Activated B cell treated with CpG ODN at 0.5 μM for 24 hours (primary cell): ENCODE measurements at regions of chr7 and their contacts with region 1.

Region 1: DNA sequence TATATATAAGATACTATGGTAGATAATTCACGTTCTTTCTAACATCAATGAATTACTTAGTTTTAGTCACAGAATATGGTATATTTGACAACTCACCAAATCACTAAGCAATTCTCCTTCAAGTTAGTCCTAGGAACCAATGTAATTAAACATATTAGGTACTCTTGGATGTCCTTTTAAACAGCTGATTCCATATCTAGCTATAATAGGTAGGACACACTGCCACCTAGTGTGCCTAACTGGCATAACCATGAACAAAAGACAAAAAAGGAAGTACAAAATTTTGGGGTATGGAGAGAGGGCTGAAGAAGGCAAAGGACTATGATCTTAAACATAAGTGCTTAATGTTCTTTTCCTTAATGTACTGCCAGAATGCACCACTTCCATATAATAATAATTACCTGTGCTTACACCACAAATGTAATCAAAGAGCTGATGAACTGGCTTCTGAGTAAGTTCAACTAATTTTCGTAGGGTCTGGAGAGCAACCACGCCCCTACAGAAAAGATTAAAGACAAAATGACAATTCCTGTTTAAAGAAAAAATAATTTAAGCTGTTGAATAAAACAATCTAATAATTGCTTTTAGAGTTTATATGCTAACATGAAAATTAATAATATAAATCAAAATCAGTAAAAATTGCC is 28.7 kb downstream of the PNPLA8 start:
- DNase-seq: no peak
- ATAC-seq: peak; percentile 95
- H3K4me3 Mint-ChIP-seq: no peak overlapping the region
- H3K27ac Mint-ChIP-seq: no peak overlapping the region
- H3K4me1 Mint-ChIP-seq: peaks cover 24% of the 10 kb centered on the region
- H3K27me3 Mint-ChIP-seq: no peaks in the 10 kb centered on the region
- CTCF ChIP-seq: peak; percentile 43

Region 2: DNA sequence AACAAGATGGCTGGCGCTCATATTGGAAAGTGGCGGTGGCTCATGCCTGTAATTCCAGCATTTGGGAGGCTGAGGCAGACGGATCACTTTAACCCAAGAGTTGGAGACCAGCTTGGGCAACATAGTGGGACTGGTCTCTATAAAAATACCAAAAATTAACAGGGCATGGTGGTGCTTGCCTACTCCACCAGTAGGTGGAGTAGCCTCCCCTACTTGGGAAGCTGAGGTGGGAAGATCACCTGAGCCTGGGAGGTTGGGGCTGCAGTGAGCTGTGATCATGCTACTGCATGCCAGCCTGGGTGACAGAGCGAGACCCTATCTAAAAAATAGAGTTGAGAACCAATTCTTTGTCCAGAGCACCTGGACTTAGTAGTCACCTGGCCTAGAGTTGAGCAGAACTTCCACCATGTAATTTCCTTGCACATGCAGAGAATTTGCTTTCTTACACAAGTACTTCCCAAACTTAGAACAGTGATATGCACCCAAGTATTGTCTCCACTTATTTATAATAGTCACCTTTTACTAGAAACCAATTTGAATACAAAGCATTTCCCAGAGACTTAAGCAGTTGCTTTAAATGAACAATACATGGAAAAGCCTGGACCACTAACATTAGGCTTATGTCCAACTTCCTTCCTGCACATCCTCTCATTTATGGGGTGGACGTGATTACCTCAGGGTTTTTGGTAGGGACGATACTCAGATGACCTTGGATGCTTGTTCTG is 382.9 kb before region 1 on chr7:
- CTCF ChIA-PET with region 1: interaction called, 5 read pairs
- POLR2A ChIA-PET with region 1: no interaction called
- intact Hi-C with region 1: loop called (anchors 1 kb)
- DNase-seq: no peak
- ATAC-seq: peak; percentile 74
- H3K4me3 Mint-ChIP-seq: no peak overlapping the region
- H3K27ac Mint-ChIP-seq: no peak overlapping the region
- H3K4me1 Mint-ChIP-seq: no peaks in the 10 kb centered on the region
- H3K27me3 Mint-ChIP-seq: no peaks in the 10 kb centered on the region
- CTCF ChIP-seq: no peak

Region 3: DNA sequence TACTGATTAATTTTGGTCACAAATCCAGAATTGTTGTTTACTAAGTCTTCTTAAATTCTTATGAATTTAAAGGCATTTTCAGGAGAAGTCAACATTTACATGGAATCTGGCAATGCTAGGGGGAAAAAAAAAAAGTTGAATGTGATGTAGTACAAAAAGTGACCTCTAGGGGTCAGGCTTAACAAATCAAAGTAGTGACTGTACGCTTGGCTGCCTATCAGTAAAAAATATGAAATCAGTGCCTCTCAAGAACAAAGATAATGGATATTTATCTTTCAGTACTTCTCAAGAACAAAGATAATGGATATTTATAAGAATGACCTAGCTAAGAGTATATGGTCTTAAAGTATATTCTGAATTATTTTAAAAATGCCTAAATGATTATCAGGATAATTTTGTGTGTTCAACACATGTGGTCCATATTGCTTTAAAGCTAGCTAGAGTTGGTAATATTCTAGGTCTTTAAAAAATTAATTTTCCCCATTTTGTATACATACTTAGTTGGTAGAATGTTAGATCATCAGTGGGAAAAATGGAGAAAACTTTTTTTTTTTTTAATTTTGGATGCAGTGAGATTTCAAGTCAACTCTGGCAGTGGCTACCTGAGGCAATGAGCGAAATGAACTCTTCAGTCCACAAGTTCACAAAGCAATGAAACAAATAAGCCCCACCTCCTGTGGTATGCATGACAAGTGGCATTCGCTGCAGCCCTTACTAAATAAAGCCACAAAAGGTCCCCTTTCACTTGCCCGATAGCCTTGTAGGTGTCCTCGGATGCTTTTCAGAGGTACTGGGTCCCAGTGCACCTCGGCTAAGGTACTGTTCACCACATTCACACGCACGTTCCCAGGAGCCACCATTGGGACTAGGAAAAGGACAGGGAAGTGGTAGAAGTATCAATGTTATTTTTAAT is 315.9 kb before region 1 on chr7:
- CTCF ChIA-PET with region 1: interaction called, 45 read pairs
- POLR2A ChIA-PET with region 1: no interaction called
- intact Hi-C with region 1: loop called (anchors 1 kb)
- DNase-seq: no peak
- ATAC-seq: peak; percentile 60
- H3K4me3 Mint-ChIP-seq: no peak overlapping the region
- H3K27ac Mint-ChIP-seq: no peak overlapping the region
- H3K4me1 Mint-ChIP-seq: no peaks in the 10 kb centered on the region
- H3K27me3 Mint-ChIP-seq: no peaks in the 10 kb centered on the region
- CTCF ChIP-seq: peak; percentile 75

Region 4: DNA sequence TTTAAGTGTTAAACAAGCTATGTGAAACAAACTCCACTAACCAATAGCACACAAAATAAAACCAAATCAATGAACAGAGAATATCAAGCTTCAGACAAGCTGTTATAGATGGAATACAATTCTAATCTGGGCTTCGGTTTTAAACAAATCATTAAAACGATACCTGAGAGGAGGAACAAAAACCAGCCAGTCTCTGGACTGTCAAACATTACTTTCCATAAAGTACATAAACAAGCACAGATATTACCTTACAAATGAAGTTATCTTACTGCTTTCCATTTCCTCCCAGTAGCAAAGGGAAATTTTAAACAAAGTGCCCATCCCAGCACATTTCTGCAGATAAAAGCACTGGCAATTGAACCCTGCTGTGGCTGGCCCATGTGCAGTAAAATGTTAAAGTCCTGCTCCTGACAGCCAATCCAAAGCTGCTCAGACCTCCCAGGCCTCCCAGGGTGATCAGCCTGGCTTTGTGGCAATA is 169.0 kb before region 1 on chr7:
- CTCF ChIA-PET with region 1: no interaction called
- POLR2A ChIA-PET with region 1: no interaction called
- intact Hi-C with region 1: no loop called
- DNase-seq: no peak
- ATAC-seq: peak; percentile 94
- H3K4me3 Mint-ChIP-seq: peak overlapping the region; percentile 69
- H3K27ac Mint-ChIP-seq: peak overlapping the region; percentile 87
- H3K4me1 Mint-ChIP-seq: peaks cover 37% of the 10 kb centered on the region
- H3K27me3 Mint-ChIP-seq: no peaks in the 10 kb centered on the region
- CTCF ChIP-seq: no peak

Region 5: GRCh38 chr7:108452722-108453121 is 44.5 kb before region 1 on chr7:
- CTCF ChIA-PET with region 1: interaction called, 64 read pairs
- POLR2A ChIA-PET with region 1: interaction called, 3 read pairs
- intact Hi-C with region 1: loop called (anchors 1 kb)
- DNase-seq: no peak
- ATAC-seq: peak; percentile 56
- H3K4me3 Mint-ChIP-seq: no peak overlapping the region
- H3K27ac Mint-ChIP-seq: no peak overlapping the region
- H3K4me1 Mint-ChIP-seq: peaks cover 26% of the 10 kb centered on the region
- H3K27me3 Mint-ChIP-seq: peaks cover 40% of the 10 kb centered on the region
- CTCF ChIP-seq: no peak

Region 6: DNA sequence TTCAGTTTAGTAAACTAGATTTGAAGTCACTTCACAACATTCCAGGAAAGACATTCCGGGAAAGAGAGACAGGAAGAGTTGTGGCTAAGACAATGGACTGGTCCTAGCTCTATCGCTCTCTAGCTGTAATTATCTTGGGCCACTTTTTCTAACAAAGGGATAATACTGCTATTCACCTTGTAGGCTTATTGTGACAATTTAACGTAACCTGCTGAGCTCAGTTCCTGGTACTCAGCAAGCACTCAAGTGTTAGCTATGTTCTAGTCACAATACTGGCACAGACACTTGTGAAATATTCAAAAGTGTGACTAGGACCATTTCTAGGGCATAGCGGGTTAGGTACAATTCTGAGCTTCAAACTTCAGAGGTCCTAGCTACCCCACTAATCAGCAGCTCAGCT is 29.0 kb before region 1 on chr7:
- CTCF ChIA-PET with region 1: interaction called, 3 read pairs
- POLR2A ChIA-PET with region 1: interaction called, 10 read pairs
- intact Hi-C with region 1: loop called (anchors 2 kb)
- DNase-seq: no peak
- ATAC-seq: no peak
- H3K4me3 Mint-ChIP-seq: no peak overlapping the region
- H3K27ac Mint-ChIP-seq: no peak overlapping the region
- H3K4me1 Mint-ChIP-seq: peaks cover 11% of the 10 kb centered on the region
- H3K27me3 Mint-ChIP-seq: peaks cover 24% of the 10 kb centered on the region
- CTCF ChIP-seq: no peak

Region 7: GRCh38 chr7:108569381-108570145 is 72.4 kb after region 1 on chr7 and contains the starts of genes DNAJB9 and THAP5:
- CTCF ChIA-PET with region 1: interaction called, 11 read pairs
- POLR2A ChIA-PET with region 1: interaction called, 94 read pairs
- intact Hi-C with region 1: no loop called
- DNase-seq: peak; percentile 97
- ATAC-seq: peak; percentile 89
- H3K4me3 Mint-ChIP-seq: peak within 1 kb of the TSS; percentile 98
- H3K27ac Mint-ChIP-seq: peak within 1 kb of the TSS; percentile 99
- H3K4me1 Mint-ChIP-seq: peaks cover 66% of the 10 kb centered on the region
- H3K27me3 Mint-ChIP-seq: no peaks in the 10 kb centered on the region
- CTCF ChIP-seq: no peak
- total RNA-seq, gene DNAJB9: 9.0 and 9.9 TPM in 2 replicates
- total RNA-seq, gene THAP5: 22.1 and 26.3 TPM in 2 replicates

Region 8: DNA sequence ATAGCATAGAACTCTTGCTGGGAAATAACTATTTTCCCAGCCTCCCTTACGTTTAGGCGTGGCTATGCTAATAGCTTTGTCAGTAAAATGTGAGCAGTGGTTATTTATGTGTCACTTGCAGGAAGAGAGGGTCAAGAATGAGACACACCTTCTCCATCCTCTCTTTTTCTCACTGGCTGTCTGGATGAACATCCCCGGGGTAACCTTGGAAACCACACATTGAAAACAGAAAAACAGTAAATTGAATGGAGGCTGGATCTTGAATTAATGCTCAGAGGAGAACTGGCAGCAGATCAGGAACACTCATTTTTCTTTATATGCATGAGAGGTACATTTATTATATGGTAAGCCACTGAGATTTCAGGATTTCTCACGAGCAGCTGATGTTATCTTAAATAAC is 200.1 kb after region 1 on chr7:
- CTCF ChIA-PET with region 1: no interaction called
- POLR2A ChIA-PET with region 1: no interaction called
- intact Hi-C with region 1: no loop called
- DNase-seq: no peak
- ATAC-seq: no peak
- H3K4me3 Mint-ChIP-seq: no peak overlapping the region
- H3K27ac Mint-ChIP-seq: no peak overlapping the region
- H3K4me1 Mint-ChIP-seq: no peaks in the 10 kb centered on the region
- H3K27me3 Mint-ChIP-seq: no peaks in the 10 kb centered on the region
- CTCF ChIP-seq: no peak